ENCODE measurements at regions of chr16 and their contacts with region 1.

Region 1: DNA sequence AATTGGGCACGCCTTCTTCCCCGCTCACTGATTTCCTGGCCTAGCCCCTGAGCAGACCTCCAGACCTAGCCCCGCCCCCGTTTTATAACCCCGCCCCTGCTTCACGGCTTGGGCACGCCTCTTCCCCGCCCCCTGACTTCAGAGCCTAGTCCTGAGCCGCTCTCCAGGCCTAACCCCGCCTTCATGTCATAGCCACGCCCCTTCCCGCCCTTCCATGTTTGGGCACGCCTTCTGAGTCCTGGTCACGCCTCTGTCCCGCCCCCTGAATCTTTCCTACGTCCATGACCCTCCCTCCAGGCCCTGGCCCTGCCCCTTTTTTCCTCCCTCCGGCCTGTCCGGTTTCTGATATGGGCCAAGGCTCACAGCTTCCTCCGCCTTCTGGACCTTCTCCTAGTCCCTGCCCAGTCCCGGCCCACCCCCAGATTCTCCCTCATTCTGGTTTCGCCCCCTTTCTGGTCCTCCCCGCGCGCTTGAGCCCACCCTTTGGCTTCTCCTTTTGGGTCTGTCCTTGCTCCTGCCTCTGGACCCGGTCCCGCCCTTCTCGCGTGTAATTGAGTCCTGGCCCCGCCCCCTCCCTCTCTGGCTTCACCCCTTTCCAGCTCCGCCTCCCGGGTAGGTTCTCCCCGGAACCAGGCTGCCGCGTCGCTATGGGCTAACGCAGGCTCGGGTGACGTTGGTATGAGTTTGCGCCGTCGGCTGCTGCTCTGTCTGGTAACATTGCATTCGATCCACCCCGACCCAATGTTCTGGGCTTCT is 15.1 kb upstream of the EEF2K start:
- DNase-seq: peak; percentile 99
- ATAC-seq: peak; percentile 69
- H3K4me3 ChIP-seq: peak overlapping the region; percentile 72 to 87 (median 72)
- H3K27ac ChIP-seq: peak overlapping the region; percentile 94
- H3K4me1 ChIP-seq: peaks cover 63% of the 10 kb centered on the region
- H3K27me3 ChIP-seq: no peaks in the 10 kb centered on the region; a peak in 2 of 5 replicates
- CTCF ChIP-seq: no peak
- EP300 ChIP-seq: no peak
- POLR2A ChIP-seq: peak in 1 of 2 experiments; percentile 78; a peak in 2 of 4 replicates
- RAD21 ChIP-seq: no peak

Region 2: DNA sequence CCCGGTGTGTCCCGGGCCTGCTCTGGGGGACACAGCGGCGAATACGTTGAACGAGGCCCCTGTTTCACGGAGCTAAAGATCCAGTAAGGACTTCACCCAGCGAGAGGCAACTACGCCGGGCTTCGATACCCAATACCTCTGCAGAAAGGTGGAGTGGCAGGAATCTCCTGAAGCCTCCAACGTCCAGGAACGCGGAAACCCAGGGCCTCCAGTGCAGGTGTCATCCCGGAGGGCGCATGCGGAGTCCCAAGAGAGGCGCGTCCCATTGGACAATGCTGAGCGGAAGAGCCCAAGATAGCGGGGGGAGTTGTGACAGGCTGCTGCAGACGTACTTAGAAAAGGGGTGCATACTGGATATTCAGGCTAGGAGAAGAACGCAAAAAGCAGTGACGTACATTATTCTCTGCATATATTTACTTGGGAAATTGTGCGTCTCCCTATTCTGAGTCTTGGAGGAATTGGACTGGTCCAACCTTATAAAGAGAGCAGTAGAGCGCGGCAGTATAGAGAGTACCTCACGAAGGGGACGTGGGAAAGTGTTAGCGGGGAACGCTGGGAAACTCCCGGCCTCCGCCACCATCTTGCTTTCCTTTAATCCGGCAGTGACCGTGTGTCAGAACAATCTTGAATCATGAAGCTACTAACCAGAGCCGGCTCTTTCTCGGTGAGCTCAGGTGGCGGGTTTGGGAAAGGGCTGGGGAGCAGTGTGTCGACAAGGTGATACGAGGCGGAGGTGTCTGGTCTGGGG is 238.0 kb before region 1 on chr16 and contains the start of gene UQCRC2:
- CTCF ChIA-PET with region 1: no interaction called
- POLR2A ChIA-PET with region 1: interaction called, 10 read pairs
- in situ Hi-C with region 1: no loop called
- intact Hi-C with region 1: loop called (anchors 1 kb)
- DNase-seq: peak; percentile 97
- ATAC-seq: peak; percentile 97
- H3K4me3 ChIP-seq: peak within 1 kb of the TSS; percentile 78 to 98 (median 84)
- H3K27ac ChIP-seq: peak within 1 kb of the TSS; percentile 93
- H3K4me1 ChIP-seq: peaks cover 64% of the 10 kb centered on the region
- H3K27me3 ChIP-seq: peaks cover 0 to 4% of the 10 kb centered on the region in 2 experiments; a peak in 1 of 5 replicates
- CTCF ChIP-seq: no peak
- EP300 ChIP-seq: peak in 1 of 2 experiments; percentile 41; a peak in 3 of 4 replicates
- POLR2A ChIP-seq: peak; percentile 81 to 99
- RAD21 ChIP-seq: peak; percentile 30; the same call in 1 of the 2 replicates
- total RNA-seq, gene UQCRC2: 536 and 704 TPM in 2 replicates

Region 3: GRCh38 chr16:22007509-22008214 is 183.3 kb before region 1 on chr16 and contains the start of gene MOSMO:
- CTCF ChIA-PET with region 1: no interaction called
- POLR2A ChIA-PET with region 1: interaction called, 34 read pairs
- in situ Hi-C with region 1: no loop called
- intact Hi-C with region 1: no loop called
- DNase-seq: peak; percentile 85
- ATAC-seq: peak; percentile 88
- H3K4me3 ChIP-seq: peak within 1 kb of the TSS; percentile 96 to 98 (median 98)
- H3K27ac ChIP-seq: peak within 1 kb of the TSS; percentile 78
- H3K4me1 ChIP-seq: peaks cover 58% of the 10 kb centered on the region
- H3K27me3 ChIP-seq: peaks cover 0 to 11% of the 10 kb centered on the region in 2 experiments; a peak in 1 of 5 replicates
- CTCF ChIP-seq: peak; percentile 46
- EP300 ChIP-seq: no peak
- POLR2A ChIP-seq: peak in 1 of 2 experiments; percentile 78; a peak in 2 of 4 replicates
- RAD21 ChIP-seq: peak; percentile 62
- total RNA-seq, gene MOSMO: 19.1 and 26.7 TPM in 2 replicates

Region 4: DNA sequence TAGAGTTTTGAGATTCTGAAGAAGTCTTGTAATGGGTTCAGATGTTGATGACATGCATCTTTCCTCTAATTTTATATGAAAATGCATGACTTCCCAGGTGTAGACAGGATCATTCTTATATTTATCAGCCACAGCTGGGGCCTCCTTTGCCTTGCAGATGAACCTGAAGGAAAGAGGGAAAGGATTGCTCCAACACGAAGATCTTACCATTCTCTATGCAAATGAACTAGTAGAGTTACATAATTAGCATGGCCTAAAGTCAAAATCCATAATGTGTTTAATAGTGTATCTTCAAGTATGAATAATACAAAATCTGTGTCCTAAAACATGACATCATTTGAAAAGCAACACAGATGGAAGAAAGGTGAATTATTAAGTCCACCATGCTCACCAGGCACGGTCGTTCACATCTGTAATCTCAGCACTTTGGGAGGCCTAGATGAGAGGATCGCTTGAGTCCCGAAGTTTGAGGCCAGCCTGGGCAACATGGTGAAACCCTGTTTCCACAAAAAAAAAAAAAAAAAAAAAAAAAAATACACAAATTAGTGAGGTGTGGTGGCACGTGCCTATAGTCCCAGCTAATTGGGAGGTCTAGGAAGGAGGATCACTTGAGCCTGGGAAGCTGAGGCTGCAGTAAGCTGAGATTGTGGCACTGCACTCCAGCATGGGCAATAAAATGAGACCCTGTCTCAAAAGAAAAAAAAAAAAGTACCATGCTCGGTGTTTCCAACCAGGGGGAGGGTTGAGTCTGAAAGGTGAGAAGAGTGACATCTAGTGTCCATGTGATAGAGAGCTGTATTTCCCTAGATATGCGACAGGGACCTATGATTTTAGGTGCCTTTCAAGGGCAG is 92.3 kb before region 1 on chr16:
- CTCF ChIA-PET with region 1: interaction called, 4 read pairs
- POLR2A ChIA-PET with region 1: no interaction called
- in situ Hi-C with region 1: no loop called
- intact Hi-C with region 1: loop called (anchors 1 kb)
- DNase-seq: peak; percentile 89
- ATAC-seq: peak; percentile 95
- H3K4me3 ChIP-seq: peak overlapping the region in 1 of 3 experiments; percentile 25; a peak in 1 of 6 replicates
- H3K27ac ChIP-seq: no peak overlapping the region
- H3K4me1 ChIP-seq: peaks cover 29% of the 10 kb centered on the region
- H3K27me3 ChIP-seq: peaks cover 0 to 15% of the 10 kb centered on the region in 2 experiments; a peak in 3 of 5 replicates
- CTCF ChIP-seq: peak; percentile 95
- EP300 ChIP-seq: no peak
- POLR2A ChIP-seq: no peak
- RAD21 ChIP-seq: peak; percentile 71

Region 5: GRCh38 chr16:22206013-22206841 is 15.3 kb after region 1 on chr16 and contains the start of gene EEF2K:
- CTCF ChIA-PET with region 1: interaction called, 3 read pairs
- POLR2A ChIA-PET with region 1: interaction called, 78 read pairs
- in situ Hi-C with region 1: no loop called
- intact Hi-C with region 1: no loop called
- DNase-seq: peak; percentile 93
- ATAC-seq: peak; percentile 89
- H3K4me3 ChIP-seq: peak within 1 kb of the TSS; percentile 89 to 97 (median 93)
- H3K27ac ChIP-seq: peak within 1 kb of the TSS; percentile 71
- H3K4me1 ChIP-seq: peaks cover 78% of the 10 kb centered on the region
- H3K27me3 ChIP-seq: no peaks in the 10 kb centered on the region; a peak in 1 of 5 replicates
- CTCF ChIP-seq: peak; percentile 96
- EP300 ChIP-seq: peak; percentile 38 to 49; a peak in 1 of 4 replicates
- POLR2A ChIP-seq: peak; percentile 69 to 92
- RAD21 ChIP-seq: peak; percentile 96
- total RNA-seq, gene EEF2K: 14.3 and 23.8 TPM in 2 replicates

Region 6: GRCh38 chr16:22374311-22375116 is 183.6 kb after region 1 on chr16 and contains the start of gene CDR2:
- CTCF ChIA-PET with region 1: no interaction called
- POLR2A ChIA-PET with region 1: interaction called, 4 read pairs
- in situ Hi-C with region 1: no loop called
- intact Hi-C with region 1: loop called (anchors 5 kb)
- DNase-seq: peak; percentile 98
- ATAC-seq: peak; percentile 93
- H3K4me3 ChIP-seq: peak within 1 kb of the TSS; percentile 81 to 98 (median 87)
- H3K27ac ChIP-seq: peak within 1 kb of the TSS; percentile 85
- H3K4me1 ChIP-seq: peaks cover 52% of the 10 kb centered on the region
- H3K27me3 ChIP-seq: no peaks in the 10 kb centered on the region; a peak in 1 of 5 replicates
- CTCF ChIP-seq: peak; percentile 8; the same call in 1 of the 2 replicates
- EP300 ChIP-seq: 0 out of 4 replicates have a peak, but pooled peaks of 1 of the 2 experiments have one; percentile 22
- POLR2A ChIP-seq: peak; percentile 91 to 93
- RAD21 ChIP-seq: peak; percentile 79
- total RNA-seq, gene CDR2: 59.0 and 76.7 TPM in 2 replicates